SK-N-SH (cell line): ENCODE measurements at regions of chr11 and their contacts with region 1.

Region 1: GRCh38 chr11:10208131-10208575 is 85.9 kb downstream of the SBF2 start:
- DNase-seq: peak; percentile 56
- H3K4me3 ChIP-seq: no peak overlapping the region
- H3K27ac ChIP-seq: no peak overlapping the region; a peak in 1 of 4 replicates
- H3K4me1 ChIP-seq: peaks cover 0 to 2% of the 10 kb centered on the region in 2 experiments; a peak in 2 of 4 replicates
- H3K27me3 ChIP-seq: no peaks in the 10 kb centered on the region
- CTCF ChIP-seq: peak; percentile 76
- EP300 ChIP-seq: no peak
- RAD21 ChIP-seq: peak; percentile 70

Region 2: DNA sequence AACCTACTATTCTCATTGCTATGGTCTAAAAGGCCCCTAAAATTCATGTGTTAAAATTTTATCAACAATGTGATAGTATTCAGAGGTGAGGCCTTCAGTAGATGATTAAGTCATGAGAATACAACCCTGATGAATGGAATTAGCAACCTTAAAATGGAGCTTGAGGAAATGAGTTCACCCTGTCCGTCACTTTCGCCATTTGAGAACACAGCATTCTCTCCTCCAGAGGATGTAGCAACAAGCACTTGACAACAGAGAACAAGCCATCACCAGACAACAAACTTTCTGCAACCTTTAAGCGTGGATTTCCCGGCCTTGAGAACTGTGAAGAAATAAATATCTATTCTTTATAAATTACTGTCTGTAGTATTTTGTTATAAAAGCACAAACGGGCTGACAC is 111.2 kb before region 1 on chr11:
- CTCF ChIA-PET with region 1: no interaction called
- POLR2A ChIA-PET with region 1: no interaction called
- DNase-seq: no peak
- H3K4me3 ChIP-seq: no peak overlapping the region
- H3K27ac ChIP-seq: no peak overlapping the region
- H3K4me1 ChIP-seq: no peaks in the 10 kb centered on the region; a peak in 2 of 4 replicates
- H3K27me3 ChIP-seq: no peaks in the 10 kb centered on the region
- CTCF ChIP-seq: no peak
- EP300 ChIP-seq: no peak
- RAD21 ChIP-seq: no peak

Region 3: GRCh38 chr11:10192036-10192435 is 16.1 kb before region 1 on chr11:
- CTCF ChIA-PET with region 1: interaction called, 15 read pairs
- POLR2A ChIA-PET with region 1: no interaction called
- DNase-seq: no peak
- H3K4me3 ChIP-seq: no peak overlapping the region
- H3K27ac ChIP-seq: no peak overlapping the region
- H3K4me1 ChIP-seq: no peaks in the 10 kb centered on the region
- H3K27me3 ChIP-seq: no peaks in the 10 kb centered on the region
- CTCF ChIP-seq: no peak
- EP300 ChIP-seq: no peak
- RAD21 ChIP-seq: no peak

Region 4: DNA sequence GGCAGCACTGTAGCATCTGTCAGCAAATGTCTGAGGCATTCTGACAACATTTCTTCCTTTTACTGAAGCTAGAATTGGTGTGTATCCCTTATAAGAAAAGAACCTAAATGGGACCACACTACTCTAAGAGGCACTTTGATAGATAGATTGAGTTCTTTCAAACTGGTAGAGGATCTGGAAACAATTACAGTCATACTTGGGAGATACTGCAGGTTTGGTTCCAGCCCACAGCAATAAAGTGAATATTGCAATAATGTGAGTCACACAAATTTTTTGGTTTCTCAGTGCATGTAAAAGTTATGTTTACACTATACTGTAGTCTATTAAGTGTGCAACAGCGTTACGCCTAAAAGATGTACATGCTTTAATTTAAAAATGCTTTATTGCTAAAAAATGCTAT is 11.1 kb before region 1 on chr11:
- CTCF ChIA-PET with region 1: interaction called, 16 read pairs
- POLR2A ChIA-PET with region 1: no interaction called
- DNase-seq: no peak
- H3K4me3 ChIP-seq: no peak overlapping the region
- H3K27ac ChIP-seq: no peak overlapping the region
- H3K4me1 ChIP-seq: no peaks in the 10 kb centered on the region
- H3K27me3 ChIP-seq: no peaks in the 10 kb centered on the region
- CTCF ChIP-seq: no peak
- EP300 ChIP-seq: no peak
- RAD21 ChIP-seq: no peak

Region 5: GRCh38 chr11:10233581-10233980 is 25.4 kb after region 1 on chr11:
- CTCF ChIA-PET with region 1: interaction called, 15 read pairs
- POLR2A ChIA-PET with region 1: no interaction called
- DNase-seq: peak; percentile 8
- H3K4me3 ChIP-seq: no peak overlapping the region
- H3K27ac ChIP-seq: peak overlapping the region in 1 of 2 experiments; percentile 62; a peak in 2 of 4 replicates
- H3K4me1 ChIP-seq: peaks cover 0 to 4% of the 10 kb centered on the region in 2 experiments; a peak in 2 of 4 replicates
- H3K27me3 ChIP-seq: no peaks in the 10 kb centered on the region
- CTCF ChIP-seq: no peak
- EP300 ChIP-seq: peak in 1 of 2 experiments; percentile 33; a peak in 1 of 4 replicates
- RAD21 ChIP-seq: no peak